Sigmoid colon (tissue), 7 donors: ENCODE measurements at regions of chr9 and their contacts with region 1.

Region 1: GRCh38 chr9:100352727-100353505 is at the start of gene TEX10:
- DNase-seq: peak; percentile 93
- H3K4me3 ChIP-seq: peak within 1 kb of the TSS; percentile 82 to 99 (median 98)
- H3K27ac ChIP-seq: peak within 1 kb of the TSS; percentile 87 to 91 (median 90)
- H3K4me1 ChIP-seq: peaks cover 0 to 25% (median 12%) of the 10 kb centered on the region in 4 donors
- H3K27me3 ChIP-seq: no peaks in the 10 kb centered on the region
- CTCF ChIP-seq: no peak
- EP300 ChIP-seq: peak in 1 of 4 donors; percentile 57
- POLR2A ChIP-seq: peak in 1 of 2 donors; percentile 37
- total RNA-seq, gene TEX10: 15.0 to 19.6 (median 17.1) TPM

Region 2: GRCh38 chr9:100411472-100412283 is 58.8 kb after region 1 on chr9:
- intact Hi-C with region 1: loop called (anchors 1 kb)
- DNase-seq: peak; percentile 95
- H3K4me3 ChIP-seq: peak overlapping the region; percentile 31 to 52 (median 50)
- H3K27ac ChIP-seq: peak overlapping the region; percentile 49 to 68 (median 52)
- H3K4me1 ChIP-seq: peaks cover 0 to 10% (median 4%) of the 10 kb centered on the region in 4 donors
- H3K27me3 ChIP-seq: no peaks in the 10 kb centered on the region
- CTCF ChIP-seq: no peak
- EP300 ChIP-seq: no peak
- POLR2A ChIP-seq: no peak

Region 3: GRCh38 chr9:100426530-100427428 is 73.9 kb after region 1 on chr9 and contains the start of gene MSANTD3:
- intact Hi-C with region 1: loop called (anchors 2 kb)
- DNase-seq: peak; percentile 77
- H3K4me3 ChIP-seq: peak within 1 kb of the TSS; percentile 83 to 96 (median 92)
- H3K27ac ChIP-seq: peak within 1 kb of the TSS; percentile 92 to 98 (median 96)
- H3K4me1 ChIP-seq: peaks cover 0 to 39% (median 32%) of the 10 kb centered on the region in 4 donors
- H3K27me3 ChIP-seq: no peaks in the 10 kb centered on the region
- CTCF ChIP-seq: peak in 1 of 4 experiments; percentile 18
- EP300 ChIP-seq: no peak
- POLR2A ChIP-seq: no peak
- total RNA-seq, gene MSANTD3: 25.2 to 41.8 (median 31.5) TPM